Activated naive CD4-positive, alpha-beta T cell treated with anti-CD3 and anti-CD28 coated beads for 36 hours (primary cell): ENCODE measurements at regions of chr17 and their contacts with region 1.

Region 1: DNA sequence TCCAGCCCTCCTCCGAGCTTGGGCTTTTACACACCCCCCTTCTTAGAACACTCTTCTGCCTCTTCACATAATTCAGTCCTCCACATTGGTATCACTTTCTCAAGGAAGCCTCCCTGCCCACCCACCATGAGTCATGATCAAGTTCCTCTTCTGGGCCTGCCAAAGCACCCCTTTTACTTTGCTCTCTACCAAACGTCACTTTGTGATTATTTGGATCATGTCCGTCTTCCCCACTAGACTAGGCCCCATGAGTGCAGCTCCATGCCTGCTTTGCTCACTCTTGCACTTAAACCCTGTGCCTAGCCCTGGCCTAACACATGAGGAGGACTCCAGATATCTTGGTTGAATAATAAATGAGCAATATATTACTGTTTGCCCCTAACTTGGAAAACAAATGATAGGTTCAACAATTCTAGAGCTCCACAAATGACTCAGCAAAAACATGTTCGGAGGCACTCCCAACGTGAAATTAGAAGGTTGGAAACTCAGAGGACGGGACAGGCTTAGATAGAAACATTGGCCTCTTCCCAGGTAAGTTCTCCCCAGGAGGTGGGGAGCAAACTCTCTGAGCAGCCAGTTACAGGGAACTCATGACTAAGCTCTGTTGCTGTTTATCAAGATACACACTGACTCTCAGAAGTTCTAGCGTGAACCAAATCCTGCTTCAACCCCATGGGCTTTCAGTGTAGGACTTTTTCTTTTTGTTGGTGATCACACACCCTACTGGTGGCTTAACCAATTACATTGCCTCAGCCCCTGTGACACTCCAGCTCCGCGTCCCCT is 28.3 kb downstream of the G6PC1 start:
- DNase-seq: peak; percentile 40
- H3K4me3 Mint-ChIP-seq: no peak overlapping the region
- H3K27ac Mint-ChIP-seq: peak overlapping the region; percentile 3
- H3K4me1 Mint-ChIP-seq: peaks cover 10% of the 10 kb centered on the region
- H3K27me3 Mint-ChIP-seq: peaks cover under 1% of the 10 kb centered on the region

Region 2: GRCh38 chr17:42720996-42721583 is 207.8 kb before region 1 on chr17:
- CTCF ChIA-PET with region 1: no interaction called
- intact Hi-C with region 1: loop called (anchors 1 kb)
- DNase-seq: peak; percentile 35
- H3K4me3 Mint-ChIP-seq: no peak overlapping the region
- H3K27ac Mint-ChIP-seq: no peak overlapping the region
- H3K4me1 Mint-ChIP-seq: no peaks in the 10 kb centered on the region
- H3K27me3 Mint-ChIP-seq: no peaks in the 10 kb centered on the region

Region 3: DNA sequence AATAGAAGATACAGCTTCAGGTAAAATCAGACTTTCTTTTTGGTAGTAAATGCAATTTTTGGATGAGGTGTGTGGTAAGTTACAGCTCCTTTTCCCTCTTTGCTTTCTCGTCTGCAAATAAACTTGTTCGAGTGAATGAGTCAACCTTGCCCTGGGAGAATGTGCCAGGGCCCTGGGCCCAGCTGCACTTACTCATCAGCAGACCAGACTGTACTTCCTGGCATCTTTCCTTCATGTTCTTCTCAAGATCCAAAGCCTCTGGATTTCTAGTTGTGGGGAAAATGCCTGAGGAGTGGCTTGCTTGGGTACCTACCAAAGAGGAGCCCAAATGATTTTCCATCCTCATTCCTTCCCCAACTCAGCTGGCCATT is 33.7 kb before region 1 on chr17:
- CTCF ChIA-PET with region 1: no interaction called
- intact Hi-C with region 1: no loop called
- DNase-seq: no peak
- H3K4me3 Mint-ChIP-seq: no peak overlapping the region
- H3K27ac Mint-ChIP-seq: no peak overlapping the region
- H3K4me1 Mint-ChIP-seq: no peaks in the 10 kb centered on the region
- H3K27me3 Mint-ChIP-seq: peaks cover 3% of the 10 kb centered on the region